ENCODE measurements at regions of chr13 and their contacts with region 1.

Region 1: GRCh38 chr13:97432917-97433726 is 847 bp upstream of the RAP2A start:
- DNase-seq: peak; percentile 98
- H3K4me3 ChIP-seq: peak overlapping the region; percentile 59 to 83 (median 68)
- H3K27ac ChIP-seq: peak overlapping the region; percentile 96 to 100 (median 100)
- H3K4me1 ChIP-seq: peaks cover 7 to 62% (median 42%) of the 10 kb centered on the region in 6 donors
- H3K27me3 ChIP-seq: no peaks in the 10 kb centered on the region
- CTCF ChIP-seq: peak in 2 of 11 experiments; percentile 13 to 14
- POLR2A ChIP-seq: peak; percentile 5 to 57 (median 25)

Region 2: DNA sequence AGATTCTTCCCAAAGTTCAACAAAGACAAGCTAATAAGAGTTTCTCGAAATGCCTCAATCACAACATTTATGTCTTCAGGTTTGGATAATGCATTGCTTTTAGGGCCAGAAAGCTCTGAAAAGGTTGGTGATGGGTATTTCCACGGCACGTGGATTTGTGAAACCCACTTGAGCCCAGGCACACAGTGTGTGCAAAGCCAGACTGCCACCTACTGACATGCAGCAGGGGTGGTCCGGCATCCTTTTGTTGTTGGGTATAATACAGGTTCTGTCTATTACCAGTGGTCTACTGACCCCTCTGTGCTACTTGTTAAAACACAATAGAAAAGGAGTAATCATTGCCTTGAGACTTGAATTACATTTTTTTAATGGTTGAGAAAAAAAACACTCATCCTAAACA is 226.5 kb after region 1 on chr13:
- intact Hi-C with region 1: loop called (anchors 10 kb)
- DNase-seq: no peak
- H3K4me3 ChIP-seq: no peak overlapping the region
- H3K27ac ChIP-seq: no peak overlapping the region
- H3K4me1 ChIP-seq: peaks cover 0 to 17% (median 0%) of the 10 kb centered on the region in 6 donors
- H3K27me3 ChIP-seq: no peaks in the 10 kb centered on the region
- CTCF ChIP-seq: peak in 3 of 11 experiments; percentile 17 to 25 (median 18)
- POLR2A ChIP-seq: no peak

Measured in spleen (tissue), 13 donors.